Activated CD4-positive, alpha-beta T cell treated with anti-CD3 and anti-CD28 coated beads for 36 hours (primary cell): ENCODE measurements at regions of chr17 and their contacts with region 1.

Region 1: GRCh38 chr17:82022981-82023374 is at the start of gene LRRC45:
- DNase-seq: peak; percentile 100
- ATAC-seq: peak; percentile 97
- H3K4me3 Mint-ChIP-seq: peak within 1 kb of the TSS; percentile 84
- H3K27ac Mint-ChIP-seq: peak within 1 kb of the TSS; percentile 76
- H3K4me1 Mint-ChIP-seq: peaks cover 14% of the 10 kb centered on the region
- H3K27me3 Mint-ChIP-seq: no peaks in the 10 kb centered on the region
- total RNA-seq, gene LRRC45: 17.6 to 20.6 TPM

Region 2: DNA sequence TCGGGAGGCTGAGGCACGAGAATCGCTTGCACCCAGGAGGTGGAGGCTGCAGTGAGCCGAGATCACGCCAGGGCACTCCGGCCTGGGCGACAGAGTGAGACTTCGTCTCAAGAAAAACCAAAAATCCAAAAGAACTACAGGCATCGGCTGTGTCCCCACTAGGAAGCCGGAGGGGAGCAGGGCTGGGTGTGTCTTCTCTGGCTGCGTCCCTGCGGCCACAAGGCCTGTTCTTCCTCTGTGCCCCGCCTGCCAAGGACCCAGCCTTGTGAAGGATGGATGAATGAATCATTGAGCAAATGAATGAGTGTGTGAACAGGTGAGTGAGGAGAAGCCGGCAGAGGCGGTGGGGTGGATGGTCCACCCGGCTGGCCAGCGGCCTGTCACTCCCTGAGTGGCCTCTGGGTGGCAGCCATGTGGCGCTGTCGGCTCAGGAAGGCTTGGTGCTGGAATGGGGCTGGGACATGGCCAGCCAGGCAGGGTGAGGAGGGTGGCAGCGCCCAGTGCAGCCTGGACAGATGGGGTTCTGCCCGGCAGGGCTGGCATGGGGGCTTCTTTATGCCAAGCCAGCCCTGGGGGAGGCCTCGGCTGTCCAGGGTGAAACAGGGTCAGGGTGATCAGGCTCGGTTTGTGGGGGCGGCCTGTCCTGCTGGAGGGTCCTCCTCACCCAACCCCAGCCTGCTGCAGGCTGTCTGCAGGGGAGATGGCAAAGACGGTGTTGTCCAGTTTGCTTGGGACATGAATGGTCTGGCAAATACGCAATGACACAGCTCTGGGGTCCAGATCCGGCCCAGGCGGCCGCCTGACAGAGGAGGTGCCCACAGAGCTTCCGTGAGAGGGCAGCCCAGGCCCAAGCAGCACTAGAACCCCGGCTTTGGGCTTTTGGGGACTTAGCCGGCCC is 289.2 kb before region 1 on chr17:
- CTCF ChIA-PET with region 1: no interaction called
- POLR2A ChIA-PET with region 1: no interaction called
- intact Hi-C with region 1: loop called in 1 of 2 experiments (anchors 1 kb)
- DNase-seq: peak; percentile 87
- ATAC-seq: peak; percentile 96
- H3K4me3 Mint-ChIP-seq: no peak overlapping the region
- H3K27ac Mint-ChIP-seq: no peak overlapping the region
- H3K4me1 Mint-ChIP-seq: peaks cover 7% of the 10 kb centered on the region
- H3K27me3 Mint-ChIP-seq: peaks cover 16% of the 10 kb centered on the region

Region 3: DNA sequence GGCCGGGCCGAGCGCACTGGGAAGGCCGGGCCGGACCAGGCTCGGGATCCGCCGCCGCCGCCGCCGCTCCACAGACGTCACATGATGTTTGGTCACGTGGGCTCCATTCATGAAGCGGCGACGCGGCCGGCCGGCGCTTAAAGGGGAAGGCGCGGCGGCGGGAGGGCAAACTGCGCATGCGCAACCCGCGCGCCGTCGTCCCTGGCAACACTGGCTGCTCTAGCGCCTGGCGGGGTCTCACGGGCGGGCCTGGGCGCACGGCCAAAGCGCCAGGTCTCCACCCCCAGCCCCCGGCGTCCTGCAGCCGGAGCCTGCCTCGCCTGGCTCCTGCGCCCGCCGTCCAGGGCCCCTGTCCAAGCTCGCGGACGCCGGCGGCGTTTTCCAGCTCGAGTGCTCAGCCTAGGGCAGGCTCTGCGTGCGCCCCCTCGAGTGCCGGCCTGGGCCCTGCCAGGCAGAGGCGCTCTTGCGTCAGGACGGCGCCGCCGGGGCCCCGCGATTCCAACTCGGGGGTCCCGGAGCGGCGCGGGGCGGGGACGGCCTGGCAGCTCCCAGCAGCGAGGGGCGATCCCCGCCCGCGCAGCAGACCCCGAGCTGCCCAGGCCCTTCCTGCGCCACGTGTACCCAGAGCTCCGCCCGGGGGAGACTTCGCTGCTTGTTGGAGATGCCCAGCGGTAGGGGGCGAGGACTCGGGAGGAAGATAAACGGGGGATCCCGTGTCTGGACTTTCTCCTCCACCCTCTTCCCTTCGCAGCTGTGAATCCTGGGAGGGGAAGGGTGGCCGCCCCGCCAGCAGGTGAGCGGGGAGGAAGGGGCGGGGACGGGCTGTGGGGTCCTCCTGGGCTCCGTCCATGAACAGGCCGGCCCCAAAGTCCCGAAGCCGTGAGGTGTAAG is 95.1 kb before region 1 on chr17 and contains the start of gene MAFG:
- CTCF ChIA-PET with region 1: interaction called, 4 read pairs
- POLR2A ChIA-PET with region 1: no interaction called
- intact Hi-C with region 1: loop called in 1 of 2 experiments (anchors 1 kb)
- DNase-seq: peak; percentile 94
- ATAC-seq: peak; percentile 62
- H3K4me3 Mint-ChIP-seq: peak within 1 kb of the TSS; percentile 85
- H3K27ac Mint-ChIP-seq: peak within 1 kb of the TSS; percentile 85
- H3K4me1 Mint-ChIP-seq: peaks cover 32% of the 10 kb centered on the region
- H3K27me3 Mint-ChIP-seq: peaks cover 2% of the 10 kb centered on the region
- total RNA-seq, gene MAFG: 15.3 to 18.3 TPM

Region 4: GRCh38 chr17:81967533-81968395 is 55.2 kb before region 1 on chr17:
- CTCF ChIA-PET with region 1: interaction called, 3 read pairs
- POLR2A ChIA-PET with region 1: interaction called, 8 read pairs
- intact Hi-C with region 1: loop called (anchors 2 kb)
- DNase-seq: peak; percentile 95
- ATAC-seq: peak; percentile 95
- H3K4me3 Mint-ChIP-seq: peak overlapping the region; percentile 60
- H3K27ac Mint-ChIP-seq: peak overlapping the region; percentile 88
- H3K4me1 Mint-ChIP-seq: peaks cover 15% of the 10 kb centered on the region
- H3K27me3 Mint-ChIP-seq: no peaks in the 10 kb centered on the region

Region 5: DNA sequence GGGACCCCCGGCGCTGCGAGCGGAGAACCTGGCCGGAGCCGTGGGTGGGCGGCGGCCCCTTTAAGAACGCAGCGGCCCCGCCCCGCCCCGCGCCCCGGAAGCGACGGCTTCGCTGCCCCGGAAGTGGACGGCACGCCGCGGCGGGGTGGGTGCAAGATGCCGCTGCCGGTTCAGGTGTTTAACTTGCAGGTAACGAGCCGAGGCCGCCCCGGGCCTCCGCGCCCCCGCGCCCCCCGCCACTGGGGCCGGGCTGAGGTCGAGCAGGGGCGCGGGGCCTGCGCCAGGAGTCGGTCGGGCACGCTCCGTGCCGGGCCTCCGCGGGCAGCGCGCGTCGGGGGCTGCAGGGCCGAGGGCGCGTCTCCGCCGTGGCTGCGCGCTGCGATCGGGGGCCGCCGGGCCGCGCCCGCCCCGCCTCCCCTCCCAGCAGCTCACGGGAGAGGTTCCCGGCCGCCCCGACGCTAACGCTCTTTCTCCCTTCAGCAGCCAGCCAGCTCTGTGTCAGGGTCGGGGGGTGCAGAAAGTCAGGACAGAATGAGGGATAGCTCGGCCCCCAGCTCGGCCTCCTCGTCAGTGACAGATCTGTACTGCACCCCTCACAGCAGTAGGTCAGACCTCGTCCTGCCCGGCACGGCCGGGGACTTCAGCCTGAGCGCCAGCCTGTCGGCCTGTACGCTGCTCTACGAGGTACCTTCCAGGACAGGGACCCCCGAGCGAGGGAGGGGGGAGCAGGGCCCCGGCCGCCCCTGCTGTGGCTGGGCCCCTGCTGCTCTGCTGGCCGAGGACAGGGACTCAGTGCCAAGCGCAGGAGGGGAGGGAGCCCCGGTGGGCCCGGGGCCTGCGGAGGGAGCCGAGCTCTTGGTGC is 29.0 kb after region 1 on chr17 and contains the starts of genes GPS1 and RFNG:
- CTCF ChIA-PET with region 1: interaction called, 3 read pairs
- POLR2A ChIA-PET with region 1: no interaction called
- intact Hi-C with region 1: loop called in 1 of 2 experiments (anchors 1 kb)
- DNase-seq: peak; percentile 90
- ATAC-seq: peak; percentile 91
- H3K4me3 Mint-ChIP-seq: peak within 1 kb of the TSS; percentile 82
- H3K27ac Mint-ChIP-seq: peak within 1 kb of the TSS; percentile 73
- H3K4me1 Mint-ChIP-seq: peaks cover 21% of the 10 kb centered on the region
- H3K27me3 Mint-ChIP-seq: no peaks in the 10 kb centered on the region
- total RNA-seq, gene GPS1: 69.0 to 73.5 TPM
- total RNA-seq, gene RFNG: 16.9 to 17.5 TPM

Region 6: GRCh38 chr17:82418001-82418986 is 395.3 kb after region 1 on chr17 and contains the starts of genes HEXD and OGFOD3:
- CTCF ChIA-PET with region 1: no interaction called
- POLR2A ChIA-PET with region 1: no interaction called
- intact Hi-C with region 1: loop called in 1 of 2 experiments (anchors 2 kb)
- DNase-seq: peak; percentile 91
- ATAC-seq: peak; percentile 88
- H3K4me3 Mint-ChIP-seq: peak within 1 kb of the TSS; percentile 73
- H3K27ac Mint-ChIP-seq: peak within 1 kb of the TSS; percentile 42
- H3K4me1 Mint-ChIP-seq: peaks cover 21% of the 10 kb centered on the region
- H3K27me3 Mint-ChIP-seq: no peaks in the 10 kb centered on the region
- total RNA-seq, gene HEXD: 23.3 to 26.0 TPM
- total RNA-seq, gene OGFOD3: 20.0 to 22.3 TPM